BJ (cell line): ENCODE measurements at regions of chr5 and their contacts with region 1.

Region 1: GRCh38 chr5:38845526-38846378 is at the start of gene OSMR:
- DNase-seq: peak; percentile 93
- H3K4me3 ChIP-seq: peak within 1 kb of the TSS; percentile 96
- H3K27me3 ChIP-seq: no peaks in the 10 kb centered on the region
- CTCF ChIP-seq: no peak
- polyA plus RNA-seq, gene OSMR: 43.4 and 53.3 TPM in 2 replicates

Region 2: GRCh38 chr5:38709678-38710306 is 136.0 kb before region 1 on chr5:
- CTCF ChIA-PET with region 1: no interaction called
- POLR2A ChIA-PET with region 1: interaction called, 12 read pairs
- DNase-seq: no peak
- H3K4me3 ChIP-seq: no peak overlapping the region
- H3K27me3 ChIP-seq: no peaks in the 10 kb centered on the region; the same call in 1 of the 2 replicates
- CTCF ChIP-seq: no peak

Region 3: DNA sequence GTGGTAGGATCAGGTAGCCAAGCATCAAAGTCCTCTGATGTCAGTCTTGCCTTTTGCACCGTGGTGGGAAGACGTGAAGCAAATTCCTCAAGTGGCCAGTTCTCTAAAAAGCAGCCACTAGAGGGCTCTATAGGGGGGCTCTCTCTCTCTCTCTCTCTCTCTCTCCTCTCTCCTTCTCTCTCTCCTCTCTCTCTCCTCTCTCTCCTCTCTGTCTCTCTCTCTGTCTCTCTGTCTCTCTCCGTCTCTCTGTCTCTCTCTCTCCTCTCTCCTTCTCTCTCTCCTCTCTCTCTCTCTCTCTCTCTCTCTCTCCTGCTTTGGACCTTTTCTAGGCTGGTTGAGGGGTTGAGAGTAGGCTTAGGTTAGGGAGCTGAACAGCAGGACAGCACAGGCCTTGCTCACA is 13.8 kb before region 1 on chr5:
- CTCF ChIA-PET with region 1: interaction called, 10 read pairs
- POLR2A ChIA-PET with region 1: no interaction called
- DNase-seq: no peak
- H3K4me3 ChIP-seq: no peak overlapping the region
- H3K27me3 ChIP-seq: no peaks in the 10 kb centered on the region
- CTCF ChIP-seq: peak; percentile 51; the same call in 1 of the 2 replicates

Region 4: DNA sequence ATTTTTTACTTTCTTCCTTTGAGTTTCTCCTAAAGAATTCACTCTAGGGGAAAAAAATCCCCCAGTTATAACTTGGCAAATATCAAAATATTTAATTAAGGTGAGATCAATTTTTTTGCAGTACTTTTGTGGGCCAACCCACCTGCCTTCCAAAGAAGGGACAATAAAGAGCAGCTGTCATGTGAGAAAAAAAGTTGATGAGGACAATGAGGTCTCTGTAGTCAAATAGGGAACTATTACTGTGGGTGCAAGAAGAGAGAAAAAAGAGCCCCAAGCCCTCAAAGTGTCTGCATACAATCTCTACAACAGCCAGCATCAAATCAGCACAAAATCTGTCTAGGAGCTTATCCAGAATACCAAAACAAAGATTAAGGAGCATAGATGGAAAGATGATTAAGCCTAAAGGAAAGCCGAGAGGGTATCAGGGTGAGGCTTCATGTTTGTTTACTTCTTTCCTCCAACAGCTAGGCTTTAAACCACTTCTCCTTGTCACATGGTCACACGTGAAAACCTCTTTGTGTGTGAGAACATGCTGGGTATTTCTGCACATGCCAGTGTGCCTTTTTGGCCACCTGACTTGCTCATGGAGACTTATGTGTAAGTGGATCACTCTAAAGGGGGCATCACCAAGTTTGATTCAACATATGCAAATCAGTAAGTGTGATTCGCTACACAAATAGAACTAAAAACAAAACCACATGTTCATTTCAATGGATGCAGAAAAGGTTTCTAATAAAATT is 392.8 kb after region 1 on chr5:
- CTCF ChIA-PET with region 1: no interaction called
- POLR2A ChIA-PET with region 1: no interaction called
- DNase-seq: no peak
- H3K4me3 ChIP-seq: no peak overlapping the region
- H3K27me3 ChIP-seq: no peaks in the 10 kb centered on the region
- CTCF ChIP-seq: no peak